ENCODE measurements at regions of chr4 and their contacts with region 1.

Region 1: GRCh38 chr4:94833394-94833793 is 75.6 kb downstream of the BMPR1B start:
- DNase-seq: no peak
- ATAC-seq: peak; percentile 89

Region 2: DNA sequence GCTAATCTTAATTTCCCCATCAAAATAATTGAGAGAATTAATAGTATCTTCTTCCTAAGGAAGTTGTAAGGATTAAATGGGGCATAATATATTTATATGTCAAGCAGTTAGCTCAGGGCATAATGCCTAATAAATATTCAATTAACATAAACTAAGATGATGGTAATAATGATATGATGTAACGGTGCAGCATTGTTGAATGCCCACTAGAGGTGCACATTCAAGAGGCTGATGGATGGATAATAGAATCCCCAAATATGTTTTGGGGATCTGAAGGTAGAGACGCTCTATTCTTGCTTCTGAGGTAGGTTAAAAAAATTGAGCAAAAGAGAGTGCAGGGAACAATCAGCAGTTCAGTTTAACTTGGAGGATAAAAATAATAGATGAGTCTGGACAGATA is 967.7 kb before region 1 on chr4:
- intact Hi-C with region 1: loop called (anchors 5 kb)
- DNase-seq: no peak
- ATAC-seq: no peak